Left colon (tissue), 2 donors: ENCODE measurements at regions of chr11 and their contacts with region 1.

Region 1: GRCh38 chr11:6315811-6316425 is 4.4 kb downstream of the CAVIN3 start:
- DNase-seq: peak; percentile 41 to 53
- ATAC-seq: peak; percentile 53

Region 2: DNA sequence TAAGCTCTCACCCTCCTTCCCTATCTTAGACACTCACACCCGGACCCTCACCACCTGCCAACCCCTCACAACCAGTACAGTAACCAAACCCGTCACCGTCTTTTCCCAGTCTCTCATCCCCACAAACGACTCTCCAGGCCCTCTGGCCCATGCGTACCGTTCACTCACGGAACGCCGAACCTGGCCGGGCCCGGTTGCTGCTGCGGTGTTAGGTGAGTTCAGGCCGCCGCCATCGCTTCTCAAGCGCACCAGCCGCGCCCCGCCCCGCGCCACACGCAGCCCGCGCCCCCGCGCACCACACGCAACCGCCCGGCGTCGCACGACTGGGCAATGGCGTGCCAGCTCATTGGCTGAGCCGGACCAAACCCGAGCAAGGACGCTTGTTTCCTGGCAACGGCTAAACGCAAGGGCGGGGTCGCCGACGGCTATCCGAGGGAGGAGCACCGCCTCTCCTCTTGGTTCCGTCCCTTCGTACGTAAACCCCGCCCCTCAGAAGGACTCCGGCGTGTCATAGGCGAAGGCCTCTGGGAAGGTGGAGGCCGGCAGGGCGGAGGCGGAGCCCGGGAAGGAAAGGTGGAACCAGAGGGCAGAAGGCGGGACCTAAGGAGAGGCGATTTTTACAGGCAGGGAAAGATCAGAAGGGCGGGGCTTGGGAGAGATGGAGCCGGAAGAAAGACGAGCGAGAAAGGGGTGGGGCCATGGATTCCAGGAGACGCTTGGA is 81.4 kb before region 1 on chr11 and contains the start of gene FHIP1B:
- intact Hi-C with region 1: loop called in 1 of 2 experiments (anchors 5 kb)
- DNase-seq: peak; percentile 99 to 100
- ATAC-seq: peak; percentile 87
- total RNA-seq, gene FHIP1B: 93.2 to 103 TPM

Region 3: DNA sequence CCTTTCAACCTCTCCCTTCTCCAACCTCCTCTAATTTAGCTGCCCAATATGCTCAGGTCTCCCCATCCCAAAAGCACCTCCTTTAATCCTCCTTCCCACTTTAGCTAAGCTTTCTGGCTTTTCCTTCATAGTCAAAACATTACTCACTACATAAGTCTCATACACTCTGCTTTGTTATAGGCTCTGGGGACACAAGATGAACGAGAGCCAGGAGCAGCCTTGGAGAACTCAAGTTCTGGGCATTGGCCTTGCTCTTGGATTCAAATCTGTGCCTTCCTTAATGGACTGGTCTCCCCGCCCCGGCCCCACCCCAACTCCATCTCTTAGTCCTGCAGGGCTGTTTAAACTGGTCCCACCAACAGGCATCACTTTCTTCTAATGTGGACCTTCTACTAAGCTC is 136.3 kb after region 1 on chr11:
- intact Hi-C with region 1: no loop called
- DNase-seq: no peak
- ATAC-seq: no peak

Region 4: GRCh38 chr11:6635082-6635932 is 319.4 kb after region 1 on chr11:
- intact Hi-C with region 1: no loop called
- DNase-seq: peak; percentile 50 to 69
- ATAC-seq: peak; percentile 86